ENCODE measurements at regions of chr2 and their contacts with region 1.

Region 1: GRCh38 chr2:240946654-240947053 is 40.5 kb downstream of the CROCC2 start:
- DNase-seq: peak in 1 of 2 donors; percentile 67
- H3K4me3 ChIP-seq: no peak overlapping the region
- CTCF ChIP-seq: no peak
- POLR2A ChIP-seq: no peak

Region 2: GRCh38 chr2:240968731-240969624 is 22.3 kb after region 1 on chr2:
- intact Hi-C with region 1: loop called (anchors 2 kb)
- DNase-seq: no peak
- H3K4me3 ChIP-seq: no peak overlapping the region
- CTCF ChIP-seq: no peak
- POLR2A ChIP-seq: no peak

Region 3: GRCh38 chr2:241234066-241234790 is 287.6 kb after region 1 on chr2:
- intact Hi-C with region 1: no loop called
- DNase-seq: no peak
- H3K4me3 ChIP-seq: no peak overlapping the region
- CTCF ChIP-seq: no peak
- POLR2A ChIP-seq: no peak